SK-MEL-5 (cell line): ENCODE measurements at regions of chr17 and their contacts with region 1.

Region 1: GRCh38 chr17:80761110-80761871 is 216.7 kb downstream of the RPTOR start:
- DNase-seq: no peak

Region 2: DNA sequence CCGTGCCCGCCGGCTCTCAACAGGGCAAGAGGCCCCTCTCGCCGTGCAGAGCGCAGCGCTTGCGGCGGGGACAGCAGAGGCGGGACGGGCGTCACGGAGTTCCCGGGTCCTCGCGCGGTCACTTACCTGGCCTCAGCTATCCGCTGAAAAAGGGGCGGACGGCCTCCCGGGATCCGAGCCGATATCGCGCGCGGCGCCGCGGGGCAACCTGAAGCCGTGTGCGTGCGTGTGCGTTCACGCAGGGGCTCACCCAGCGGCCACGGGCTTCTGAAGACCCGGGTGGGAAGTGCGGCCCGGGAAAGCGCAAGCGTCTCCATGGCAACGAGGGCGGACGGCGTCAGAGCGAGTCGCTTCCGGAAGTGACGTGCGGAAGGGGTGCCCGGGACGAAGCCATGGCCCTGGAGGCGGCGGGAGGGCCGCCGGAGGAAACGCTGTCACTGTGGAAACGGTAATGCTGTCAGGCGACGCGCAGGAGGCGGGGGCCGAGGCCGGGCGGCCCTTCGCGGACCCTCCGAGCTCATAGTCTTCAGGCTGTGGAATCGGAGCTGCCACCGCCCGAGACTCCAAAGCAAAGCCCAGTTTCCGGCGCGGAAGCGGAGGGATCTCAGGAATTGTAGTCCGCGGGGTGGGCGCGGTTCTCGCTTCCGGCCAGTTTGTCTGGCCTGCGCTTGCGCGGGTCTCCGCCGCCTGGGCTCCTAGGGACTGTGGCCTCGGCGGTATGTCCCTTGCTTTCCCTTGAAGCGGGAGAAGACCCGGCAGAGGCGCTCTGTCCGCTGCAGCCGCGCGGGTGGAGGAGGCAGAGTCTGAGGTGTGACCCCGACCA is 346.3 kb before region 1 on chr17 and contains the start of gene ENDOV:
- in situ Hi-C with region 1: loop called (anchors 10 kb)
- DNase-seq: peak; percentile 98
- total RNA-seq, gene ENDOV: 13.9 and 15.0 TPM in 2 replicates